ENCODE measurements at regions of chr10 and their contacts with region 1.

Region 1: GRCh38 chr10:13787015-13787421 is 200.3 kb downstream of the PRPF18 start:
- DNase-seq: peak; percentile 46 to 95 (median 66)
- ATAC-seq: peak; percentile 85
- H3K4me3 ChIP-seq: peak overlapping the region; percentile 32
- H3K4me3 Mint-ChIP-seq: peak overlapping the region; percentile 83
- H3K27ac ChIP-seq: peak overlapping the region; percentile 93 to 97
- H3K27ac Mint-ChIP-seq: no peak overlapping the region
- H3K4me1 ChIP-seq: peaks cover 67% of the 10 kb centered on the region
- H3K4me1 Mint-ChIP-seq: peaks cover 36% of the 10 kb centered on the region
- H3K27me3 ChIP-seq: no peaks in the 10 kb centered on the region
- H3K27me3 Mint-ChIP-seq: no peaks in the 10 kb centered on the region
- CTCF ChIP-seq: no peak

Region 2: GRCh38 chr10:13673156-13673555 is 113.9 kb before region 1 on chr10:
- CTCF ChIA-PET with region 1: no interaction called
- POLR2A ChIA-PET with region 1: no interaction called
- intact Hi-C with region 1: no loop called
- DNase-seq: no peak
- ATAC-seq: no peak
- H3K4me3 ChIP-seq: no peak overlapping the region
- H3K4me3 Mint-ChIP-seq: no peak overlapping the region
- H3K27ac ChIP-seq: no peak overlapping the region
- H3K27ac Mint-ChIP-seq: no peak overlapping the region
- H3K4me1 ChIP-seq: no peaks in the 10 kb centered on the region
- H3K4me1 Mint-ChIP-seq: no peaks in the 10 kb centered on the region
- H3K27me3 ChIP-seq: no peaks in the 10 kb centered on the region
- H3K27me3 Mint-ChIP-seq: no peaks in the 10 kb centered on the region
- CTCF ChIP-seq: no peak

Region 3: GRCh38 chr10:14009371-14010100 is 222.5 kb after region 1 on chr10:
- CTCF ChIA-PET with region 1: no interaction called
- POLR2A ChIA-PET with region 1: interaction called, 3 read pairs
- intact Hi-C with region 1: loop called (anchors 2 to 5 kb)
- DNase-seq: peak; percentile 33 to 92 (median 66)
- ATAC-seq: peak; percentile 85
- H3K4me3 ChIP-seq: peak overlapping the region; percentile 52
- H3K4me3 Mint-ChIP-seq: peak overlapping the region; percentile 74
- H3K27ac ChIP-seq: peak overlapping the region; percentile 53 to 64
- H3K27ac Mint-ChIP-seq: peak overlapping the region; percentile 88
- H3K4me1 ChIP-seq: peaks cover 32% of the 10 kb centered on the region
- H3K4me1 Mint-ChIP-seq: peaks cover 62% of the 10 kb centered on the region
- H3K27me3 ChIP-seq: no peaks in the 10 kb centered on the region
- H3K27me3 Mint-ChIP-seq: no peaks in the 10 kb centered on the region
- CTCF ChIP-seq: no peak

Region 4: GRCh38 chr10:14185316-14186045 is 398.5 kb after region 1 on chr10:
- CTCF ChIA-PET with region 1: interaction called, 7 read pairs
- POLR2A ChIA-PET with region 1: interaction called, 10 read pairs
- intact Hi-C with region 1: loop called (anchors 1 to 2 kb)
- DNase-seq: peak in 12 of 14 experiments; percentile 10 to 89 (median 26)
- ATAC-seq: peak; percentile 68
- H3K4me3 ChIP-seq: peak overlapping the region; percentile 46
- H3K4me3 Mint-ChIP-seq: peak overlapping the region; percentile 77
- H3K27ac ChIP-seq: peak overlapping the region; percentile 52 to 85
- H3K27ac Mint-ChIP-seq: peak overlapping the region; percentile 91
- H3K4me1 ChIP-seq: peaks cover 26% of the 10 kb centered on the region
- H3K4me1 Mint-ChIP-seq: peaks cover 20% of the 10 kb centered on the region
- H3K27me3 ChIP-seq: peaks cover 19 to 26% of the 10 kb centered on the region in 2 experiments
- H3K27me3 Mint-ChIP-seq: peaks cover 28% of the 10 kb centered on the region
- CTCF ChIP-seq: no peak

Region 5: DNA sequence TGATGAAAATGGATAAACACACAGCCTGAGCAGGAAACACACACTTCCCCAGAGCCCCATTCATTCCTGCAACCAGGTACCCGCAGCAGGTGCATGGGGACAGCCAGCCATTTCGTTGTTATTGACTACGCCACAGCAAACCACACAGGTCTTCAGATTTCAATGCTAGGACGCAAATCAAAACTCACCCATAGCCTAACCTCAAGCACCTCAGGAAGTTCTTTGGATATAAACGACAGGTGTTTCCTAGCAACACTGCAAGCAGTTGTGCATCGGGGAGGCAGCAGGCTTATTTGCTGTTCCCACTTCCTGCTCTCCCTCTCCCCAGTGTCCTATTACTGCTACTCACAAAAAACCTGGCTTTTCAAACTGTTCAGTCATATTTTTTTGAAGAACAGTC is 720.2 kb after region 1 on chr10:
- CTCF ChIA-PET with region 1: no interaction called
- POLR2A ChIA-PET with region 1: no interaction called
- intact Hi-C with region 1: loop called in 1 of 2 experiments (anchors 5 kb)
- DNase-seq: peak in 13 of 14 experiments; percentile 9 to 90 (median 48)
- ATAC-seq: peak; percentile 94
- H3K4me3 ChIP-seq: no peak overlapping the region
- H3K4me3 Mint-ChIP-seq: peak overlapping the region; percentile 76
- H3K27ac ChIP-seq: peak overlapping the region; percentile 53 to 64
- H3K27ac Mint-ChIP-seq: peak overlapping the region; percentile 91
- H3K4me1 ChIP-seq: peaks cover 29% of the 10 kb centered on the region
- H3K4me1 Mint-ChIP-seq: peaks cover 41% of the 10 kb centered on the region
- H3K27me3 ChIP-seq: no peaks in the 10 kb centered on the region
- H3K27me3 Mint-ChIP-seq: no peaks in the 10 kb centered on the region
- CTCF ChIP-seq: no peak

Region 6: GRCh38 chr10:14648005-14648765 is 861.2 kb after region 1 on chr10:
- CTCF ChIA-PET with region 1: no interaction called
- POLR2A ChIA-PET with region 1: no interaction called
- intact Hi-C with region 1: loop called in 1 of 2 experiments (anchors 1 kb)
- DNase-seq: peak; percentile 44 to 92 (median 65)
- ATAC-seq: peak; percentile 85
- H3K4me3 ChIP-seq: peak overlapping the region; percentile 55
- H3K4me3 Mint-ChIP-seq: peak overlapping the region; percentile 84
- H3K27ac ChIP-seq: peak overlapping the region; percentile 91 to 95
- H3K27ac Mint-ChIP-seq: peak overlapping the region; percentile 99
- H3K4me1 ChIP-seq: peaks cover 43% of the 10 kb centered on the region
- H3K4me1 Mint-ChIP-seq: peaks cover 69% of the 10 kb centered on the region
- H3K27me3 ChIP-seq: no peaks in the 10 kb centered on the region
- H3K27me3 Mint-ChIP-seq: no peaks in the 10 kb centered on the region
- CTCF ChIP-seq: no peak

Region 7: DNA sequence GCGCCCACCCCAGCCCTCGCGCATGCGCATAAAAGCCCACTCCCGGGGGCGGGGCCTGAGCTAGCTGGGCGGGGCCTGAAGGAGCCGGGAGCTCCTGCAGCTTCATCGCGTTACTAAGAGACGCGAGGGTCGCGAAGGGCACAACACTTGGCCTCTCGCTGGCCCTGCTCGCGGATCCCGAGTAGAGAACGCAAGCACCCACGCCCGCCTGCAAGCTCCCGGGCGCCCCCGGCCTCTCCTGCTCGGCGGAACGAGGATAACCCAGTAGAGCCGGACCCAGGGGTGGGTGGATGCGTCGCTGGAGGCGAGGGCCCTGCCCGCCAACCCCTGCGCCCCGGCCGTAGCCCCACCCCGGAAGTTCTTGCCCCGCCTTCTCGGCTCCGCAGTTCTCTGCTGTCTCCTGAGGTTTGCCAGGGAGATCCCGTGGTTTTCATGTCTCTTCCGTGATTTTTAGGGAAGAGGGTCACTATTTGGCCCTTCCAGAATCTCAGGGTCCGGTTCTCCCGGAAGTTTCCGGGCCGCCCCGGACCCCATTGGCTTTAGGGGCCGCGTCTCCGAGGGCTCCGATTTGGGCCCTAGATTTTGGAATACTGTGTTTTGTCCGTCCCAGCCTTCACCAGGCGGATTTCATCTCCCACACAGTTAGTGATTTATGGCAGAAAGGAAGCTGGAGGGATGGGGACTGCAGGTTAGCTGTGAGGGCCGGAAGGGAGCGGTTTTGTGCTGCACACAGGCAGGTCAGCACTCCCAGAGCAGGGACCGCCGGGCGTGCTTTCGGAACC is 1172.4 kb after region 1 on chr10 and contains the start of gene MEIG1:
- CTCF ChIA-PET with region 1: no interaction called
- POLR2A ChIA-PET with region 1: no interaction called
- intact Hi-C with region 1: loop called in 1 of 2 experiments (anchors 10 kb)
- DNase-seq: peak; percentile 83 to 96 (median 88)
- ATAC-seq: peak; percentile 85
- H3K4me3 ChIP-seq: peak within 1 kb of the TSS; percentile 83
- H3K4me3 Mint-ChIP-seq: peak within 1 kb of the TSS; percentile 98
- H3K27ac ChIP-seq: peak within 1 kb of the TSS; percentile 86 to 92
- H3K27ac Mint-ChIP-seq: peak within 1 kb of the TSS; percentile 98
- H3K4me1 ChIP-seq: peaks cover 30% of the 10 kb centered on the region
- H3K4me1 Mint-ChIP-seq: peaks cover 34% of the 10 kb centered on the region
- H3K27me3 ChIP-seq: no peaks in the 10 kb centered on the region
- H3K27me3 Mint-ChIP-seq: no peaks in the 10 kb centered on the region
- CTCF ChIP-seq: no peak
- total RNA-seq, gene MEIG1: not detected